CD4-positive, alpha-beta T cell (primary cell): ENCODE measurements at regions of chr2 and their contacts with region 1.

Region 1: GRCh38 chr2:29196792-29197788 is 81.9 kb downstream of the CLIP4 start:
- DNase-seq: peak; percentile 64 to 85 (median 73)
- ATAC-seq: peak; percentile 97
- H3K4me3 ChIP-seq: no peak overlapping the region
- H3K4me3 Mint-ChIP-seq: no peak overlapping the region
- H3K27ac ChIP-seq: no peak overlapping the region
- H3K27ac Mint-ChIP-seq: no peak overlapping the region
- H3K4me1 ChIP-seq: peaks cover 3% of the 10 kb centered on the region
- H3K4me1 Mint-ChIP-seq: peaks cover 5% of the 10 kb centered on the region
- H3K27me3 ChIP-seq: no peaks in the 10 kb centered on the region
- H3K27me3 Mint-ChIP-seq: no peaks in the 10 kb centered on the region
- CTCF ChIP-seq: peak; percentile 95

Region 2: GRCh38 chr2:27932396-27932795 is 1264.7 kb before region 1 on chr2:
- CTCF ChIA-PET with region 1: no interaction called
- POLR2A ChIA-PET with region 1: no interaction called
- intact Hi-C with region 1: no loop called
- DNase-seq: no peak
- ATAC-seq: no peak
- H3K4me3 ChIP-seq: no peak overlapping the region
- H3K4me3 Mint-ChIP-seq: no peak overlapping the region
- H3K27ac ChIP-seq: no peak overlapping the region
- H3K27ac Mint-ChIP-seq: no peak overlapping the region
- H3K4me1 ChIP-seq: peaks cover 2% of the 10 kb centered on the region
- H3K4me1 Mint-ChIP-seq: peaks cover 9% of the 10 kb centered on the region
- H3K27me3 ChIP-seq: no peaks in the 10 kb centered on the region
- H3K27me3 Mint-ChIP-seq: no peaks in the 10 kb centered on the region
- CTCF ChIP-seq: no peak

Region 3: GRCh38 chr2:29164091-29164846 is 32.8 kb before region 1 on chr2:
- CTCF ChIA-PET with region 1: no interaction called
- POLR2A ChIA-PET with region 1: no interaction called
- intact Hi-C with region 1: loop called in 1 of 2 experiments (anchors 5 kb)
- DNase-seq: no peak
- ATAC-seq: no peak
- H3K4me3 ChIP-seq: no peak overlapping the region
- H3K4me3 Mint-ChIP-seq: no peak overlapping the region
- H3K27ac ChIP-seq: no peak overlapping the region
- H3K27ac Mint-ChIP-seq: no peak overlapping the region
- H3K4me1 ChIP-seq: no peaks in the 10 kb centered on the region
- H3K4me1 Mint-ChIP-seq: peaks cover 10% of the 10 kb centered on the region
- H3K27me3 ChIP-seq: no peaks in the 10 kb centered on the region
- H3K27me3 Mint-ChIP-seq: no peaks in the 10 kb centered on the region
- CTCF ChIP-seq: no peak

Region 4: GRCh38 chr2:29174937-29175336 is 22.2 kb before region 1 on chr2:
- CTCF ChIA-PET with region 1: no interaction called
- POLR2A ChIA-PET with region 1: no interaction called
- intact Hi-C with region 1: no loop called
- DNase-seq: no peak
- ATAC-seq: no peak
- H3K4me3 ChIP-seq: no peak overlapping the region
- H3K4me3 Mint-ChIP-seq: no peak overlapping the region
- H3K27ac ChIP-seq: no peak overlapping the region
- H3K27ac Mint-ChIP-seq: no peak overlapping the region
- H3K4me1 ChIP-seq: no peaks in the 10 kb centered on the region
- H3K4me1 Mint-ChIP-seq: no peaks in the 10 kb centered on the region
- H3K27me3 ChIP-seq: no peaks in the 10 kb centered on the region
- H3K27me3 Mint-ChIP-seq: no peaks in the 10 kb centered on the region
- CTCF ChIP-seq: no peak